ENCODE measurements at regions of chr7 and their contacts with region 1.

Region 1: DNA sequence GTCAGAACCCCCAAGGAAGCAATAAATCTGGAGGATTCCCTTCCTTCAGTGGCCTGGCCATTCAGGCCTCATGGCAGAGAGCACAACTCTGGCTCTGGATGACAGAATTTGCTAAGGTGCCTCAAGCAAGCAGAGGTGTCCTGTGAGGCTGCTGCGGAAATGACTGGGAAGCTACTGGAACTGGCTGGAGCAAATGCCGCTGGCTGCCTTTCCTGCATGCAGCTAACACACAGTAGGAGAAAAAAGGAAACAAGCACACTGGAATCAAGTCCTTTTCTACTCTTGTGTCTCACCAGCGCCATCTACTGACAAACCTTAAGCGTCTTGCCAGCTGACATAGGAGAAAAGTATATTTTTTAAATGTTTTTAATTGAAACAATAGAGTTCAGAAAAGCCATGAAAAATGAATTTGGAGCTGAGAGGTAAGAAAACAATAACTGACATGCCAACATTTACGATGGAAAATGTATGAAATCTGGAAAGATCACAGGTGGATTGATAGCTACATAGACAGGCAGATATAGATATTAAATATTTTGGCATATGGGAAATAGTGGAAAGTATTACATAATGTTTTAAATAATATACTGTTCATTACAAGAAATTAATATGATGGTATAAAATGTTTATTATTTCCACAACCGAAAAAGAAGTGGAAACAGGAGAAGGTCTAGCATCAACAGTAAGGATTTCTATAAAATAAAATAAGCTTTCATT is 951.6 kb downstream of the ANKRD7 start:
- DNase-seq: peak; percentile 80
- H3K4me3 ChIP-seq: no peak overlapping the region
- H3K27ac ChIP-seq: no peak overlapping the region
- H3K4me1 ChIP-seq: peaks cover 6% of the 10 kb centered on the region
- H3K27me3 ChIP-seq: no peaks in the 10 kb centered on the region
- CTCF ChIP-seq: peak; percentile 87

Region 2: GRCh38 chr7:118250860-118251494 is 925.1 kb before region 1 on chr7:
- CTCF ChIA-PET with region 1: no interaction called
- POLR2A ChIA-PET with region 1: no interaction called
- intact Hi-C with region 1: loop called (anchors 10 kb)
- DNase-seq: peak; percentile 23
- H3K4me3 ChIP-seq: no peak overlapping the region
- H3K27ac ChIP-seq: no peak overlapping the region
- H3K4me1 ChIP-seq: no peaks in the 10 kb centered on the region
- H3K27me3 ChIP-seq: no peaks in the 10 kb centered on the region
- CTCF ChIP-seq: peak; percentile 66

Measured in A673 (cell line).